ENCODE measurements at regions of chr12 and their contacts with region 1.

Region 1: GRCh38 chr12:52879394-52880351 is 25.2 kb downstream of the KRT8 start:
- DNase-seq: peak; percentile 72
- H3K4me3 Mint-ChIP-seq: peak overlapping the region; percentile 65
- H3K27ac Mint-ChIP-seq: no peak overlapping the region
- H3K4me1 Mint-ChIP-seq: peaks cover 7% of the 10 kb centered on the region
- H3K27me3 Mint-ChIP-seq: peaks cover 8% of the 10 kb centered on the region

Region 2: GRCh38 chr12:52372216-52373154 is 507.2 kb before region 1 on chr12:
- intact Hi-C with region 1: loop called (anchors 2 kb)
- DNase-seq: peak; percentile 24
- H3K4me3 Mint-ChIP-seq: no peak overlapping the region
- H3K27ac Mint-ChIP-seq: no peak overlapping the region
- H3K4me1 Mint-ChIP-seq: no peaks in the 10 kb centered on the region
- H3K27me3 Mint-ChIP-seq: peaks cover 11% of the 10 kb centered on the region

Region 3: GRCh38 chr12:52566847-52567291 is 312.8 kb before region 1 on chr12:
- intact Hi-C with region 1: no loop called
- DNase-seq: no peak
- H3K4me3 Mint-ChIP-seq: no peak overlapping the region
- H3K27ac Mint-ChIP-seq: no peak overlapping the region
- H3K4me1 Mint-ChIP-seq: no peaks in the 10 kb centered on the region
- H3K27me3 Mint-ChIP-seq: peaks cover 11% of the 10 kb centered on the region

Region 4: GRCh38 chr12:52582971-52583456 is 296.7 kb before region 1 on chr12:
- intact Hi-C with region 1: loop called (anchors 1 kb)
- DNase-seq: peak; percentile 52
- H3K4me3 Mint-ChIP-seq: no peak overlapping the region
- H3K27ac Mint-ChIP-seq: no peak overlapping the region
- H3K4me1 Mint-ChIP-seq: peaks cover 32% of the 10 kb centered on the region
- H3K27me3 Mint-ChIP-seq: peaks cover 13% of the 10 kb centered on the region

Region 5: DNA sequence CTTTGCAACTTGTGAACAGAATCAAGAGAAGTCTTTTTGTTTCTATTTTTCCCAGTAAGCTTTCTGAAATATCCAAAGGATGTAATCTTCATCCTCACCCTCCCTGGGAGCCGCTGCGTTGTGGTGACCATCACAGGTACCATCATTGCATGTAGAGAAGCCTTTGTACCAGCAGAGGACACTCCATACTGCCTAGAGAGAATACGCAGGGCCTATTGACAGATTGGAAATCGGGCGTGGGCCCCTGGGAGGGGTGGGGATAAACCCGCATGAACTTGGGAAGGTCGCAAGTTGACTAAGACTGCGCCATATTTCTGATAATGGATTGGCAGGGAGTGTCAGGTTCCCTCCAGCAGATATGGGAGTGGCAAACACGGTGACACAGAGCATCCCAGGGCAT is 212.2 kb before region 1 on chr12:
- intact Hi-C with region 1: no loop called
- DNase-seq: no peak
- H3K4me3 Mint-ChIP-seq: no peak overlapping the region
- H3K27ac Mint-ChIP-seq: no peak overlapping the region
- H3K4me1 Mint-ChIP-seq: peaks cover 3% of the 10 kb centered on the region
- H3K27me3 Mint-ChIP-seq: peaks cover 10% of the 10 kb centered on the region

Region 6: GRCh38 chr12:52913076-52913821 is 33.6 kb after region 1 on chr12:
- intact Hi-C with region 1: no loop called
- DNase-seq: no peak
- H3K4me3 Mint-ChIP-seq: no peak overlapping the region
- H3K27ac Mint-ChIP-seq: no peak overlapping the region
- H3K4me1 Mint-ChIP-seq: peaks cover 2% of the 10 kb centered on the region
- H3K27me3 Mint-ChIP-seq: peaks cover 8% of the 10 kb centered on the region

Measured in activated T-helper 2 cell treated with anti-CD3 and anti-CD28 coated beads, Interferon-gamma antibody, Interleukin-2, Interleukin-4, amounts not matched to agents 10 μg/mL and 5 μg/mL and 100 μg/mL, durations not matched to agents 14 hours and 24 hours and 36 hours (primary cell).